Tibial artery (tissue), 4 donors: ENCODE measurements at regions of chr5 and their contacts with region 1.

Region 1: GRCh38 chr5:181005791-181006190 is 17.1 kb downstream of the BTNL3 start:
- DNase-seq: no peak
- H3K4me3 ChIP-seq: no peak overlapping the region
- H3K27ac ChIP-seq: no peak overlapping the region
- H3K4me1 ChIP-seq: no peaks in the 10 kb centered on the region
- H3K27me3 ChIP-seq: no peaks in the 10 kb centered on the region
- CTCF ChIP-seq: no peak

Region 2: DNA sequence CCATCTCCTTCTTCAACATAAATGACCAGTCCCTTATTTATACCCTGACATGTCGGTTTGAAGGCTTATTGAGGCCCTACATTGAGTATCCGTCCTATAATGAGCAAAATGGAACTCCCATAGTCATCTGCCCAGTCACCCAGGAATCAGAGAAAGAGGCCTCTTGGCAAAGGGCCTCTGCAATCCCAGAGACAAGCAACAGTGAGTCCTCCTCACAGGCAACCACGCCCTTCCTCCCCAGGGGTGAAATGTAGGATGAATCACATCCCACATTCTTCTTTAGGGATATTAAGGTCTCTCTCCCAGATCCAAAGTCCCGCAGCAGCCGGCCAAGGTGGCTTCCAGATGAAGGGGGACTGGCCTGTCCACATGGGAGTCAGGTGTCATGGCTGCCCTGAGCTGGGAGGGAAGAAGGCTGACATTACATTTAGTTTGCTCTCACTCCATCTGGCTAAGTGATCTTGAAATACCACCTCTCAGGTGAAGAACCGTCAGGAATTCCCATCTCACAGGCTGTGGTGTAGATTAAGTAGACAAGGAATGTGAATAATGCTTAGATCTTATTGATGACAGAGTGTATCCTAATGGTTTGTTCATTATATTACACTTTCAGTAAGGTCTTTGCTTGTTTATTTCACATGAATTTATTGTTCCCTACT is 55.4 kb before region 1 on chr5:
- intact Hi-C with region 1: loop called (anchors 2 kb)
- DNase-seq: no peak
- H3K4me3 ChIP-seq: no peak overlapping the region
- H3K27ac ChIP-seq: no peak overlapping the region
- H3K4me1 ChIP-seq: no peaks in the 10 kb centered on the region
- H3K27me3 ChIP-seq: no peaks in the 10 kb centered on the region
- CTCF ChIP-seq: no peak

Region 3: GRCh38 chr5:180982008-180982741 is 23.6 kb before region 1 on chr5:
- intact Hi-C with region 1: no loop called
- DNase-seq: no peak
- H3K4me3 ChIP-seq: no peak overlapping the region
- H3K27ac ChIP-seq: no peak overlapping the region
- H3K4me1 ChIP-seq: no peaks in the 10 kb centered on the region
- H3K27me3 ChIP-seq: no peaks in the 10 kb centered on the region
- CTCF ChIP-seq: no peak

Region 4: GRCh38 chr5:181059297-181060230 is 53.8 kb after region 1 on chr5:
- intact Hi-C with region 1: no loop called
- DNase-seq: no peak
- H3K4me3 ChIP-seq: no peak overlapping the region
- H3K27ac ChIP-seq: no peak overlapping the region
- H3K4me1 ChIP-seq: peaks cover 0 to 7% (median 2%) of the 10 kb centered on the region in 4 donors
- H3K27me3 ChIP-seq: peaks cover 0 to 85% of the 10 kb centered on the region in 2 donors
- CTCF ChIP-seq: no peak

Region 5: GRCh38 chr5:181088289-181088688 is 82.5 kb after region 1 on chr5:
- intact Hi-C with region 1: no loop called
- DNase-seq: no peak
- H3K4me3 ChIP-seq: no peak overlapping the region
- H3K27ac ChIP-seq: no peak overlapping the region
- H3K4me1 ChIP-seq: no peaks in the 10 kb centered on the region
- H3K27me3 ChIP-seq: peaks cover 0 to 29% of the 10 kb centered on the region in 2 donors
- CTCF ChIP-seq: no peak